Panc1 (cell line): ENCODE measurements at regions of chr19 and their contacts with region 1.

Region 1: DNA sequence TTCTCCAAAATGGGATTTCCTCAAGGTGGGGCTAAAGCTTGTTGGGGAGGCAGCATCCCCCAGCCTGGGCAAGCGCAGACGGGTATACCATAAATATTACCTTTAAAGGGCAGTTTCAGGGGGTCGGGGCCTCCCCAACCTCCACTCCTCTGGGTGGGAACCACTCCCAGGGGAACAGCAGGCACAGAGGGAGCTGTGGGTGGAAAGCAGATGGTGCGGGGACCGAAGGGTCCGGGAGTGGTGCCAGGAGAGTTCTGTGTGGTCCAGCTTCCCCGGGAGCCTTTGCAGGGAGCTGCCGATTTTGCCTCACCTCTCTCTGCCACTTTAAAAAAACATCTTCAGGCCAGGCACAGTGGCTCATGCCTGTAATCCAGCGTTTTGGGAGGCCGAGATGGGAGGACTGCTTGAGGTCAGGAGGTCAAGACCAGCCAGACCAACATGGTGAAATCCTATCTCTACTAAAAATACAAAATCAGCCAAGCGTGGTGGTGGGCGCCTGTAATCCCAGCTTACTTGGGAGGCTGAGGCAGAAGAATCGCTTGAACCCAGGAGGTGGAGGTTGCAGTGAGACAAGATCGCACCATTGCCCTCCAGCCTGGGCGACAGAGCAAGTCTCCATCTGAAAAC is 5.5 kb downstream of the MAST3 start:
- DNase-seq: no peak
- ATAC-seq: no peak
- H3K4me3 ChIP-seq: no peak overlapping the region
- H3K27ac ChIP-seq: no peak overlapping the region
- H3K4me1 ChIP-seq: peaks cover 8% of the 10 kb centered on the region; the same call in 1 of the 2 replicates
- H3K27me3 ChIP-seq: no peaks in the 10 kb centered on the region
- CTCF ChIP-seq: no peak

Region 2: DNA sequence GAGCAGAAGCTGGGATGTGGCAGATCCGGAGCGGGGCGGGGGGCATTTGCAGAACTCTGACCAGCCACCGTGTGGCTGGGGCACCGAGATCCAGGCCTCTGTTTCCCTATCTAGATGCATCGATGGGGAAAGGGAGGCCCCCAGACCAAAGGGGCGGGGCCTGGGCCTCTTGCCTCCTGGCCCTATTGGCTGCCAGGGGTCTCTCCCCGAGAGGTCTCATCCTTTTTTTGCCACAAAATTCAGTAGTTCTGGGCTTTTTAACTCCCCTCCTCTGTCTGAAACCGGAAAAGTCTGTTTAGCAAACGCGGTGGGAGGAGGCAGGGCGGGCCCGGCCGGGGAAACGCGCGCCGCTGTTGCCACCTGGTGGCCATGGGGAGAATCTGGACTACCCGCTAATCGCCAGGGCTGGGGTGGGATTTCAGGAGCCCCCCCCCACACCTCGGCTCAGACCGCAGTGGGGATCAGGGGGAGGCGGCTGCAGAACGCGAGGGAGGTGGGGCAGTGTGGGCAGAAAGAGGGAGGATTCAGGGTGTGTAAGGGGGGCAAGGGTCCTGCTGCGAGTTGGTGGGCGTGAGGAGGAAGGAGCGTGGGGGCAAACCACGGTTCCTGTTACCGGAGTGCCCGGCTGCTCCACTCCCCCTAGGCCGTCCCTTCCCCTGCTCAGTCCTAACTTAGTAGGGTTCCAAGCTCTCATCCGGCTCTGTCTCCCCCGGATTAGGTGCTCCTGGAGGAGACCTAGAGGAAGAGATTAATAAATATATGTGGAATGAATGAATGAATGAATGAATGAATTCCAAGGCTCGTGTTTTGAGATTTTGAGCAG is 44.6 kb before region 1 on chr19:
- CTCF ChIA-PET with region 1: no interaction called
- POLR2A ChIA-PET with region 1: interaction called, 14 read pairs
- in situ Hi-C with region 1: no loop called
- intact Hi-C with region 1: no loop called
- DNase-seq: no peak
- ATAC-seq: peak; percentile 86
- H3K4me3 ChIP-seq: peak overlapping the region in 1 of 2 experiments; percentile 23; a peak in 2 of 4 replicates
- H3K27ac ChIP-seq: peak overlapping the region; percentile 80
- H3K4me1 ChIP-seq: no peaks in the 10 kb centered on the region
- H3K27me3 ChIP-seq: no peaks in the 10 kb centered on the region
- CTCF ChIP-seq: peak; percentile 87

Region 3: DNA sequence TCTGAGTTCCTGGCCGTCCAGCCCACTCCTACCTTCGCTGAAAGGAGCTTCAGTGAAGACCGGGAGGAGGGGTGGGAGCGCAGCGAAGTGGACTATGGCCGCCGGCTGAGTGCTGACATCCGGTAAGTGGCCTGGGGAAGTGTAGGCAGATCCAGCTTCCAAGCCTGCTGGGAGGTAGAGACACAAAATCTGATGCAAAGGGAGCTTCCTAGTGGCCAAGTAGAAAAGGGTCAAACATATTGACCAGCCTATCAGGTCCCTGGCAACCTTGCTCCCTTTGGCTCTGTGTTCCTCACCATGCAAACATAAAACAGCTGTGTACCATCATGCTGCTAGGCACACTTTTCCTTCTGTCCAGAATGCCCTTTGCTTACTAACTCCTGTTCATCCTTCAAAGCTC is 38.9 kb after region 1 on chr19:
- CTCF ChIA-PET with region 1: interaction called, 11 read pairs
- POLR2A ChIA-PET with region 1: no interaction called
- in situ Hi-C with region 1: no loop called
- intact Hi-C with region 1: no loop called
- DNase-seq: no peak
- ATAC-seq: no peak
- H3K4me3 ChIP-seq: no peak overlapping the region
- H3K27ac ChIP-seq: no peak overlapping the region
- H3K4me1 ChIP-seq: no peaks in the 10 kb centered on the region
- H3K27me3 ChIP-seq: no peaks in the 10 kb centered on the region
- CTCF ChIP-seq: no peak

Region 4: DNA sequence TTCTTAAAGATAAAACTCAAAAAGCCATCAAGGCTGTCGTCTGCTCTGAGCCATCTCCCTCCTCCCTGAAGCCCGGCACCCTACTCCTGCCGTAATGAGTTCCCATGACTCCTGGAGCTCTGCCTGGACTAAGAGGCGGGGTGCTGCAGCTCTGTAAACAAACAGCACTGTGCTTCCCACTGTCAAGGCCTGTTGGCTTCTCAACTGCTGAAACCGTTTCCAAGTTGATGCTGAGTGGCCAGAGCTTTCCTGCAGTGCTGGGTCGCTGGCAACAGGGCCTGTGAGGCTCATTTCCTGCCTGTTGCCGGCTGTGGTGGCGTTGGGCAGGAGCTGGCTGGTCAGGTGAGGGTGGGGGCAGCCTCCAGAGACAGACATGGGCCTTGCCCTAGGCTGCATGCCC is 361.6 kb after region 1 on chr19:
- CTCF ChIA-PET with region 1: no interaction called
- POLR2A ChIA-PET with region 1: no interaction called
- in situ Hi-C with region 1: no loop called
- intact Hi-C with region 1: no loop called
- DNase-seq: no peak
- ATAC-seq: peak; percentile 43
- H3K4me3 ChIP-seq: no peak overlapping the region
- H3K27ac ChIP-seq: no peak overlapping the region
- H3K4me1 ChIP-seq: peaks cover 26% of the 10 kb centered on the region
- H3K27me3 ChIP-seq: no peaks in the 10 kb centered on the region
- CTCF ChIP-seq: no peak